Esophagus muscularis mucosa (tissue), 4 donors: ENCODE measurements at regions of chr4 and their contacts with region 1.

Region 1: GRCh38 chr4:48673537-48673936 is 106.5 kb downstream of the FRYL start:
- DNase-seq: no peak
- H3K4me3 ChIP-seq: no peak overlapping the region
- H3K27ac ChIP-seq: no peak overlapping the region
- H3K4me1 ChIP-seq: peaks cover 0 to 2% (median under 1%) of the 10 kb centered on the region in 4 donors
- H3K27me3 ChIP-seq: no peaks in the 10 kb centered on the region
- CTCF ChIP-seq: no peak
- EP300 ChIP-seq: no peak
- POLR2A ChIP-seq: no peak

Region 2: GRCh38 chr4:48190839-48191238 is 482.7 kb before region 1 on chr4:
- intact Hi-C with region 1: no loop called
- DNase-seq: no peak
- H3K4me3 ChIP-seq: no peak overlapping the region
- H3K27ac ChIP-seq: no peak overlapping the region
- H3K4me1 ChIP-seq: peaks cover 0 to 7% (median 7%) of the 10 kb centered on the region in 4 donors
- H3K27me3 ChIP-seq: no peaks in the 10 kb centered on the region
- CTCF ChIP-seq: no peak
- EP300 ChIP-seq: no peak
- POLR2A ChIP-seq: no peak

Region 3: DNA sequence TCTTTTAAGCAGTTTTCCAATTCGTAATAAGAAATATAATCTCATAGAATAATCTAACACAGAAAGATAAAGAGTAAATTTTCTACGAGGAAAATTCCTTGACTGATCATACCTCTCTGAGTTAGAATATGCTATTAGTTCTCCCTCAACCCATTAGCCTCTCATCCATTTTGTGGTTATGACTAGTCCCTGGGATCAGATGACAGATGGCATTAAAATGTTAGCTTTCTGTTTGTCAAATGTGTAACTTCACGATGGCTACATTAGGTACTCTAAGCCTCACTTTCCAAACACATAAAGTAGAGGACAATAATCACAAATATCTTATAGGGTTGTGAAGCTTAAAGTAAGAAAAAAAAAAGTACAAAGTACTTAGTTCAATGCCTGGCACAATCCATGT is 71.3 kb before region 1 on chr4:
- intact Hi-C with region 1: no loop called
- DNase-seq: no peak
- H3K4me3 ChIP-seq: no peak overlapping the region
- H3K27ac ChIP-seq: no peak overlapping the region
- H3K4me1 ChIP-seq: peaks cover 0 to 4% (median 0%) of the 10 kb centered on the region in 4 donors
- H3K27me3 ChIP-seq: no peaks in the 10 kb centered on the region
- CTCF ChIP-seq: no peak
- EP300 ChIP-seq: no peak
- POLR2A ChIP-seq: no peak

Region 4: GRCh38 chr4:48642421-48643374 is 30.8 kb before region 1 on chr4:
- intact Hi-C with region 1: loop called (anchors 2 kb)
- DNase-seq: no peak
- H3K4me3 ChIP-seq: no peak overlapping the region
- H3K27ac ChIP-seq: no peak overlapping the region
- H3K4me1 ChIP-seq: peaks cover 22 to 39% (median 36%) of the 10 kb centered on the region in 4 donors
- H3K27me3 ChIP-seq: no peaks in the 10 kb centered on the region
- CTCF ChIP-seq: no peak
- EP300 ChIP-seq: no peak
- POLR2A ChIP-seq: no peak